Endothelial cell of umbilical vein (primary cell): ENCODE measurements at regions of chr12 and their contacts with region 1.

Region 1: DNA sequence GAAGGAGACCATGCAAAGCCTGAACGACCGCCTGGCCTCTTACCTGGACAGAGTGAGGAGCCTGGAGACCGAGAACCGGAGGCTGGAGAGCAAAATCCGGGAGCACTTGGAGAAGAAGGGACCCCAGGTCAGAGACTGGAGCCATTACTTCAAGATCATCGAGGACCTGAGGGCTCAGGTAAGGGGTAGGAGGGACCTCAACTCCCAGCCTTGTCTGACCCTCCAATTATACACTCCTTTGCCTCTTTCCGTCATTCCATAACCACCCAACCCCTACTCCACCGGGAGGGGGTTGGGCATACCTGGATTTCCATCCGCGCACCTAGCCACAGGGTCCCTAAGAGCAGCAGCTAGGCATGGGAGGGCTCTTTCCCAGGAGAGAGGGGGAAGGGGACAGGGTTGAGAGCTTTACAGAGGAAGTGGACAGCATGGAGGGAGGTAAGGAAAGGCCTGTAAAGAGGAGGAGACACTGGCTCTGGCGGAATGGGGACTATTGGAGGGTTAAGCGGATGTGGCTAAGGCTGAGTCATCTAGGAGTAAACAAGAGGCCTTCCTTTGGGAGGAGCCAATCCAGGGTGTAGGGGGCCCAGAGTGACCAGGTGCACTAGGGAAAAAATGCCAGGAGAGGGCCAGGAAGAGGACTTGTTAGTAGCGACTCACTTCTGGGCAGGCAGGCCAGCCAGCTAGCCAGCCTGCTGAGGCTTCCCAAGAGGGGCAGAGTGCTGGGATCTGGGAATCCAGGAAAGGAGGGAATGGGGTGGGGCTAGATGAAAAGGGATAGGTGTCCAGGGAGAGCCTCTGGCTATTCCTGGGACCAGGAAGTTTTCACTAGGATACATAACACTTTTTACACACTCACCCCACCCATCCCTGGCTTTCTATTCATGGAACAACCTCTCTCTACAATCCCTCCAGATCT is 754 bp downstream of the KRT18 start:
- DNase-seq: peak; percentile 96
- H3K4me3 ChIP-seq: peak overlapping the region; percentile 67 to 93 (median 74)
- H3K27ac ChIP-seq: peak overlapping the region; percentile 91
- H3K4me1 ChIP-seq: peaks cover 37% of the 10 kb centered on the region
- H3K27me3 ChIP-seq: no peaks in the 10 kb centered on the region
- CTCF ChIP-seq: no peak
- POLR2A ChIP-seq: no peak

Region 2: DNA sequence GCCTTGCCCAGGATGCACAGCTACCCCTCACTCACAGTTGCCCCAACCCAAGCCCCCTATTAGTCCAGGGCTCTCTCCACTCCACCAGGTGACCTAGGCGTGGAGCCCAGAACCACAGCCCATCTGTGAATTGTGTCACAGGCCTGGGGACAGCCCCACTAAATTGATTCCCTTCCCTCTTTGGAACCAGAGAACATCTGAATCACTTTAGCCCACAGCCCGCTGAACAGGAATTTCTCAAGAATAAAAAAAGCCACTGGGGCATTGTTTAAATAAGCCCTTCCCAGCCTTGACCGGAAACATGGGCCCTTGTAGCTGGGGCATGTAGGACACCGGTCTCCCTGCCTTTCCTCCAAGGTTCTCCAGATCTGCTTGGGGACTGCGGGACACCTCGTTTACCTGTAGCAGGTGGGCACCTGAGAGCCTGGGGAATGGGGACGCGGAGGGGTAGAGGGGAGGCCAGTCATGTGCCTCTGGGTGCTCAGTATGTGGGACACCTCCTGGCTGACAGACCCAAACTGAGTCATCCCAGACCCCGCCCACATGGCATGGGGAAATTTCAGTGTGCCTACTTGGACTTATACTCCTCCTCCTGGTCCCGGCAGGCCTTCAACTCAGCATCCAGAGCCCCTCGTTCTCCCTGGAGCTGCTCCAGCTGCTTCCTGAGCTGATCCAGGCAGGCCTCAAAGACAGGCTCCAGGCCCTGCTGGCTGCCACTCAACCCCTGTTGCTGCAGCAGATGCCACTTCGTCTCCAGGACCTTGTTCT is 102.2 kb before region 1 on chr12:
- CTCF ChIA-PET with region 1: no interaction called
- POLR2A ChIA-PET with region 1: no interaction called
- dilution Hi-C with region 1: no loop called
- intact Hi-C with region 1: no loop called
- DNase-seq: no peak
- H3K4me3 ChIP-seq: no peak overlapping the region
- H3K27ac ChIP-seq: no peak overlapping the region
- H3K4me1 ChIP-seq: no peaks in the 10 kb centered on the region
- H3K27me3 ChIP-seq: peaks cover 4 to 5% of the 10 kb centered on the region in 2 experiments
- CTCF ChIP-seq: no peak
- POLR2A ChIP-seq: no peak

Region 3: GRCh38 chr12:52903285-52903854 is 46.3 kb before region 1 on chr12:
- CTCF ChIA-PET with region 1: interaction called, 4 read pairs
- POLR2A ChIA-PET with region 1: no interaction called
- dilution Hi-C with region 1: no loop called
- intact Hi-C with region 1: loop called (anchors 1 kb)
- DNase-seq: peak; percentile 75
- H3K4me3 ChIP-seq: peak overlapping the region in 2 of 3 experiments; percentile 13 to 44
- H3K27ac ChIP-seq: peak overlapping the region; percentile 69
- H3K4me1 ChIP-seq: peaks cover 10% of the 10 kb centered on the region
- H3K27me3 ChIP-seq: no peaks in the 10 kb centered on the region
- CTCF ChIP-seq: no peak
- POLR2A ChIP-seq: no peak

Region 4: GRCh38 chr12:52924764-52925716 is 24.6 kb before region 1 on chr12:
- CTCF ChIA-PET with region 1: interaction called, 13 read pairs
- POLR2A ChIA-PET with region 1: interaction called, 4 read pairs
- dilution Hi-C with region 1: no loop called
- intact Hi-C with region 1: loop called (anchors 1 kb)
- DNase-seq: peak; percentile 91
- H3K4me3 ChIP-seq: no peak overlapping the region
- H3K27ac ChIP-seq: peak overlapping the region; percentile 96
- H3K4me1 ChIP-seq: peaks cover 42% of the 10 kb centered on the region
- H3K27me3 ChIP-seq: no peaks in the 10 kb centered on the region
- CTCF ChIP-seq: no peak
- POLR2A ChIP-seq: peak; percentile 76

Region 5: DNA sequence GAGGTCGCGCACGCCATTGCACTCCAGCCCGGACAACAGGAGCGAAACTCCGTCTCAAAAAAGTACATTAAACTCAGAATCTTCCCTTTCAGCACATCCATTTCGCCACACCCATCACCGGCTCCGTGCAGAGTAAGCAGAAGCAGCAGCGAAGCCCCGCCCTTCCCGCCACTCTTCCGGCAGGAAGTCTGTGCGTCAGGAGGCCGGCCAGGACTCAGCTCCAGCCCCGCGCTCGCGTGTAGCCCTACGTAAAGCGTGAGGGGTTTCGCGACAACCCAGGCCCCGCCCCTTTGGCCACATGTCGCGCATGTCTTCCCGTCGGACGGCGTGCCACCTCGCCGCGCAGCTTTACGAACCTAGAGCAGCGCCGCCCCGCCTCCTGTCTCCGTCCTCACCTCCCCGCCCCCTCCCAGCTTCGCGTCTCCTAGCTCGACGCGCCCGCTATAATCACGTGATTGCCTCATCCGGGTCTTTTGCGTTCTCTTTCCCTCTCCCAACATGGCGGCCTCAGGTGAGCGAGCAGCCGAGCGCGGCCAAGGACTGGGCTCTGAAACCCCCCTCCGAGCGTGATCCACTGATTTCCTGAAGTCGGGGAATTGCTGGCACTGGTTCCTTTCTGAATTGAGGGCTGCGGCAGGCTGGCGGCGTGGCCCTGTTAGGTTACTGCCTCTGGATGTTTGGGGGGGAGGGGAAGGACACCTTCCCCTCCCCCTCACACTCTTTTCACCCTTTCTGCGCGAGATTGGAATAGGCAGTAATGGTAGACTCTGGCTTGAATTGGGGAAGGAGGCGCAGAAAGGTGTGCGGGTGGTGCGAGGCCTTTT is 56.5 kb after region 1 on chr12 and contains the start of gene EIF4B:
- CTCF ChIA-PET with region 1: no interaction called
- POLR2A ChIA-PET with region 1: interaction called, 4 read pairs
- dilution Hi-C with region 1: no loop called
- intact Hi-C with region 1: loop called (anchors 2 kb)
- DNase-seq: peak; percentile 100
- H3K4me3 ChIP-seq: peak within 1 kb of the TSS; percentile 81 to 92 (median 85)
- H3K27ac ChIP-seq: peak within 1 kb of the TSS; percentile 78
- H3K4me1 ChIP-seq: peaks cover 36% of the 10 kb centered on the region
- H3K27me3 ChIP-seq: no peaks in the 10 kb centered on the region
- CTCF ChIP-seq: no peak
- POLR2A ChIP-seq: peak; percentile 80
- total RNA-seq, gene EIF4B: 372 and 382 TPM in 2 replicates